Testis (tissue), 5 donors: ENCODE measurements at regions of chr6 and their contacts with region 1.

Region 1: GRCh38 chr6:138115877-138116660 is 8.8 kb upstream of the PERP start:
- DNase-seq: peak; percentile 64
- H3K4me3 ChIP-seq: no peak overlapping the region
- H3K27ac ChIP-seq: no peak overlapping the region
- H3K4me1 ChIP-seq: no peaks in the 10 kb centered on the region
- H3K27me3 ChIP-seq: no peaks in the 10 kb centered on the region
- CTCF ChIP-seq: peak; percentile 46 to 77 (median 62)
- POLR2A ChIP-seq: no peak

Region 2: GRCh38 chr6:138000941-138001340 is 115.1 kb before region 1 on chr6:
- intact Hi-C with region 1: no loop called
- DNase-seq: no peak
- H3K4me3 ChIP-seq: no peak overlapping the region
- H3K27ac ChIP-seq: no peak overlapping the region
- H3K4me1 ChIP-seq: no peaks in the 10 kb centered on the region
- H3K27me3 ChIP-seq: no peaks in the 10 kb centered on the region
- CTCF ChIP-seq: no peak
- POLR2A ChIP-seq: no peak

Region 3: GRCh38 chr6:138287144-138287955 is 171.3 kb after region 1 on chr6:
- intact Hi-C with region 1: loop called (anchors 5 kb)
- DNase-seq: peak; percentile 38
- H3K4me3 ChIP-seq: no peak overlapping the region
- H3K27ac ChIP-seq: no peak overlapping the region
- H3K4me1 ChIP-seq: no peaks in the 10 kb centered on the region
- H3K27me3 ChIP-seq: no peaks in the 10 kb centered on the region
- CTCF ChIP-seq: peak in 1 of 3 experiments; percentile 40
- POLR2A ChIP-seq: no peak